B cell (primary cell): ENCODE measurements at regions of chr17 and their contacts with region 1.

Region 1: DNA sequence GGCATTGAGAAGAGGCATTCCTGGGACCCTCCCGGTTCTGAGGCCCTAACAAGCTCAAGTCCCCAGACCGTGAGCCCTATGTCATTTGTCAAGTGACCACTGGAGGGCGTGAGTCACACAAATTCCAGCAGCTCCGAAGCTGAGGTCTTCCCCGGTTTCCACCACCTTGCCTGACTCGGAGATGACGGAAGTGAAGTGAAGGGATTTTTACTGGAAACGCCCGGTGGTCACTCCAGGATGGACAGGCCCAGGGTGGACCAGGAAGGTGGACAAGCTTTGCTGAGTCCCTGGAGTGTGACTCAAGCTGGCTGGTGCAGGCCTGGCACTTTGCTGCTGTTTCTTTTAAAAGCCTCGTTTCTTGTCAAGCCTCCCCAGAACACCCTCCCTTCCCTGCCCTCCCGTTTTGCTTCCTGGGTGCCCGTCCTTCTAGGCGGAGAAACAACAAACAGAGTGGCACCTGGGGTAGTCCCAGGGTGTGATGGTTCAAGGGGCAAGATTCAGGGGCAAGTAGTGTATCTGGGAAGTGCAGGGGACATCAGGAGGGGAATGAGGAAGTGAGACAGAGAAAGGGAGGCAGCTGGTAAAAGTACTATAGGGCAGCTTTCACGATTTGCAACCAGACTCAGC is 5.3 kb upstream of the NOS2 start:
- DNase-seq: peak; percentile 88
- ATAC-seq: peak; percentile 64
- H3K4me3 ChIP-seq: peak overlapping the region; percentile 33 to 60 (median 48)
- H3K4me3 Mint-ChIP-seq: peak overlapping the region; percentile 88
- H3K27ac ChIP-seq: peak overlapping the region; percentile 58 to 78
- H3K27ac Mint-ChIP-seq: peak overlapping the region; percentile 97
- H3K4me1 ChIP-seq: peaks cover 26 to 46% of the 10 kb centered on the region in 2 donors
- H3K4me1 Mint-ChIP-seq: peaks cover 38% of the 10 kb centered on the region
- H3K27me3 ChIP-seq: no peaks in the 10 kb centered on the region
- H3K27me3 Mint-ChIP-seq: peaks cover 2% of the 10 kb centered on the region
- CTCF ChIP-seq: peak; percentile 93

Region 2: GRCh38 chr17:27733773-27734172 is 71.9 kb before region 1 on chr17:
- CTCF ChIA-PET with region 1: no interaction called
- POLR2A ChIA-PET with region 1: no interaction called
- intact Hi-C with region 1: no loop called
- DNase-seq: no peak
- ATAC-seq: no peak
- H3K4me3 ChIP-seq: no peak overlapping the region
- H3K4me3 Mint-ChIP-seq: no peak overlapping the region
- H3K27ac ChIP-seq: no peak overlapping the region
- H3K27ac Mint-ChIP-seq: no peak overlapping the region
- H3K4me1 ChIP-seq: no peaks in the 10 kb centered on the region
- H3K4me1 Mint-ChIP-seq: no peaks in the 10 kb centered on the region
- H3K27me3 ChIP-seq: peaks cover 0 to 3% (median 2%) of the 10 kb centered on the region in 4 experiments
- H3K27me3 Mint-ChIP-seq: peaks cover 35% of the 10 kb centered on the region
- CTCF ChIP-seq: no peak

Region 3: DNA sequence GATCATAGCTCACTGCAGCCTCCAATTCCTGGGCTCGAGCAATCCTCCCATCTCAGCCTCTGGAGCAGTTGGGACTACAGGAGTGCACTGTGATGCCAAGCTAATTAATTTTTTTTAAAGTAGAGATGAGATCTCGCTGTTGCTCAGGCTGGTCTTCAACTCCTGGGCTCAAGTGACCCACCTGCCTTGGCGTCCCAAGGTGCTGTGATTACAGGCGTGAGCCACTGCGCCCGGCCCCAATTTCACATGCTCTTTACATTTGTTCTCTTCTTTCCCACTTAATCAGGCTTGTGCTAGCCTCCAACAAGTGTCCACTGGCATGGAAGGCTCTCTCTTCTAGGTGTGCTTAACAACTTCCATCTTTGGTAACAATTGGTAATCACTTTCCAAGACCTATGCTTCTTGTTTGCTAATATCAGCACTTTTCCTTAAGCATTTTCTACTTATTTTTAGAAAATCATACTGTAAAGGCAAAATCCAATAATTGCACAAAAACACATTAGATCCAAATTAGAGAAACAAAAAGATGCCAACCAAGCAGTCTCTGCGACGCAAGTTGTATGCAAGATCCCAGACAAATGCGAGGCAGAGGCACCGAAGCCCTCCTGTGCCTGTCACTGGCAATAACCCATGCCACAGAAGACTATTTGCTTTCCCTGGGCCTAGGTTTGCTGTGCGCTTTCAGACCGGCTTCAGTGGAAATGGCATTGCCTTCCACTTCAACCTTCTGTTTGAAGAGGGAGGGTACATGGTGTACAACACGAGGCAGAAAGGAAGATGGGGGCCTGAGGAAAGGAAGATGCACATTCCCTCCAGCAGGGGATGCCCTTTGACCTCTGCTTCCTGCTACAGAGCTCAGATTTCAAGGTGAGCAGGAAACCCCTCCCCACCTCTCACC is 57.9 kb before region 1 on chr17:
- CTCF ChIA-PET with region 1: no interaction called
- POLR2A ChIA-PET with region 1: no interaction called
- intact Hi-C with region 1: no loop called
- DNase-seq: no peak
- ATAC-seq: no peak
- H3K4me3 ChIP-seq: no peak overlapping the region
- H3K4me3 Mint-ChIP-seq: no peak overlapping the region
- H3K27ac ChIP-seq: no peak overlapping the region
- H3K27ac Mint-ChIP-seq: no peak overlapping the region
- H3K4me1 ChIP-seq: no peaks in the 10 kb centered on the region
- H3K4me1 Mint-ChIP-seq: peaks cover 2% of the 10 kb centered on the region
- H3K27me3 ChIP-seq: no peaks in the 10 kb centered on the region
- H3K27me3 Mint-ChIP-seq: no peaks in the 10 kb centered on the region
- CTCF ChIP-seq: no peak

Region 4: GRCh38 chr17:27873760-27874159 is 68.1 kb after region 1 on chr17:
- CTCF ChIA-PET with region 1: interaction called, 252 read pairs
- POLR2A ChIA-PET with region 1: no interaction called
- intact Hi-C with region 1: no loop called
- DNase-seq: no peak
- ATAC-seq: no peak
- H3K4me3 ChIP-seq: no peak overlapping the region
- H3K4me3 Mint-ChIP-seq: no peak overlapping the region
- H3K27ac ChIP-seq: no peak overlapping the region
- H3K27ac Mint-ChIP-seq: no peak overlapping the region
- H3K4me1 ChIP-seq: no peaks in the 10 kb centered on the region
- H3K4me1 Mint-ChIP-seq: no peaks in the 10 kb centered on the region
- H3K27me3 ChIP-seq: no peaks in the 10 kb centered on the region
- H3K27me3 Mint-ChIP-seq: no peaks in the 10 kb centered on the region
- CTCF ChIP-seq: no peak

Region 5: DNA sequence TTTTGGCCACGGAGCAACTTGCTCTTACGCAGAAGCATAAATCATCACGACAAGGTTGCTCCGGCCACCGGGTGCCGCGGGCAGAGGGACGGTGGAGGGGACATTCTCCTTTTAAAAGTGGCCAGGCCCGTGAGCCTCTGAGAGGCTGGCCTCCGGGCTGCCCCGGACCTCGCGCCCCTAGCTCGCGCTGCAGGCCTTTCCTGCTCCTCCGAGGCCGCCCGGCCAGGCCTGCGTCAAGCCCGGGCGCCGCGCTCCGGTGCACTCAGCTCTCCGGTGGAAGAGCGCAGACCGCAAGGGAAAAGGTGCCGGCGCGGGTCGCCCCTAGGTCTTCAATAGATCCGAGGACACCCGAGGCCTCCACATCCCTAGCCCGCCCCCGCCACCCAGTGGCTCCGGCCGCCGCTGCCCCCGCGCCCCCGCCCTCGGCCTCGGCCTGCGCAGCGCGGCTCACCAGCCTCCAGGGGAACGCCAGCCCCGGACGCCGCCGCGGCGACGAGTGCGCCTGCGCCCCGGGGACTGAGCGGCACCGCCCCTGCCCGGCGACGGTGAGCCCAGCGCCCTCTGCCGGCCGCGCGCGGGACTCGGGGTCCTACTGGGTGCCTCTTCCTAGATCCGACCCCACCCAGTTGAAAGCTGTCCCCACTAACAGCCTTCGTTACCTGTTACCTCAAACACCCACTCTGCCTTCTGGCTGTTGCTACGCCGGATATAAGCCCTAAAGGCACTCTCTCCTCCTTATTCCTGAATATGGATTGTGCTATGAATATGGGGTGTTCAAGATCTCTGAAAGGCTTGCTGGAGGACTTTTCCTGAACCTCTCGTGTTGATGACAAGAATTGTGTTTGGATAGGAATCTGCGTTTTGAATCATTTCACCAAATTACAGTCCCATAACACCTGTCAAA is 87.5 kb after region 1 on chr17 and contains the start of gene LYRM9:
- CTCF ChIA-PET with region 1: interaction called, 108 read pairs
- POLR2A ChIA-PET with region 1: interaction called, 9 read pairs
- intact Hi-C with region 1: loop called (anchors 1 kb)
- DNase-seq: peak; percentile 93
- ATAC-seq: peak; percentile 98
- H3K4me3 ChIP-seq: peak within 1 kb of the TSS; percentile 58 to 82 (median 71)
- H3K4me3 Mint-ChIP-seq: peak within 1 kb of the TSS; percentile 80
- H3K27ac ChIP-seq: peak within 1 kb of the TSS; percentile 12 to 57
- H3K27ac Mint-ChIP-seq: peak within 1 kb of the TSS; percentile 77
- H3K4me1 ChIP-seq: peaks cover 16 to 23% of the 10 kb centered on the region in 2 donors
- H3K4me1 Mint-ChIP-seq: peaks cover 23% of the 10 kb centered on the region
- H3K27me3 ChIP-seq: no peaks in the 10 kb centered on the region
- H3K27me3 Mint-ChIP-seq: peaks cover 4% of the 10 kb centered on the region
- CTCF ChIP-seq: peak; percentile 91
- total RNA-seq, gene LYRM9: 12.1 and 14.0 TPM in 2 replicates

Region 6: GRCh38 chr17:28030386-28030785 is 224.8 kb after region 1 on chr17:
- CTCF ChIA-PET with region 1: no interaction called
- POLR2A ChIA-PET with region 1: no interaction called
- intact Hi-C with region 1: no loop called
- DNase-seq: no peak
- ATAC-seq: no peak
- H3K4me3 ChIP-seq: no peak overlapping the region
- H3K4me3 Mint-ChIP-seq: no peak overlapping the region
- H3K27ac ChIP-seq: no peak overlapping the region
- H3K27ac Mint-ChIP-seq: no peak overlapping the region
- H3K4me1 ChIP-seq: no peaks in the 10 kb centered on the region
- H3K4me1 Mint-ChIP-seq: no peaks in the 10 kb centered on the region
- H3K27me3 ChIP-seq: peaks cover 0 to 2% (median 0%) of the 10 kb centered on the region in 4 experiments
- H3K27me3 Mint-ChIP-seq: no peaks in the 10 kb centered on the region
- CTCF ChIP-seq: no peak

Region 7: DNA sequence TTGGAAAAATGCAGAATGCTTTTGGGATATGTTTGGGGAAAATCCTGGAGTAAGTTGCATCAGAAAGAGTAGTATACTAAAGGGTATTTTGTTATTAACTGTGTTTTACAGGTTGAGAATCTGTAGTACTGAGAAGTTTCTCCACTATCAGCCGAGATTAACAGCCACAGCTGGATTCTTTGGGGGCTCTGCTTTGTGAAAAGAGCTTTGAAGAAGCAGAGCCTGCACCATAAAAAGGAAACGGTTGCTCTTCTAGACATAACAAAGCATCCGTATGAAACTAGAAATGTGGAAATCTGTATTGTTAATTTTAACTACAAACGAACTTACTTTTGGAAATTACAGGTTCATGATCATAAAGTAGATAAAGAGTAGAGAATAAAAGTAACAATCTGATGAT is 242.2 kb after region 1 on chr17:
- CTCF ChIA-PET with region 1: no interaction called
- POLR2A ChIA-PET with region 1: no interaction called
- intact Hi-C with region 1: no loop called
- DNase-seq: no peak
- ATAC-seq: no peak
- H3K4me3 ChIP-seq: no peak overlapping the region
- H3K4me3 Mint-ChIP-seq: no peak overlapping the region
- H3K27ac ChIP-seq: no peak overlapping the region
- H3K27ac Mint-ChIP-seq: no peak overlapping the region
- H3K4me1 ChIP-seq: peaks cover 27 to 46% of the 10 kb centered on the region in 2 donors
- H3K4me1 Mint-ChIP-seq: peaks cover 71% of the 10 kb centered on the region
- H3K27me3 ChIP-seq: no peaks in the 10 kb centered on the region
- H3K27me3 Mint-ChIP-seq: no peaks in the 10 kb centered on the region
- CTCF ChIP-seq: no peak

Region 8: DNA sequence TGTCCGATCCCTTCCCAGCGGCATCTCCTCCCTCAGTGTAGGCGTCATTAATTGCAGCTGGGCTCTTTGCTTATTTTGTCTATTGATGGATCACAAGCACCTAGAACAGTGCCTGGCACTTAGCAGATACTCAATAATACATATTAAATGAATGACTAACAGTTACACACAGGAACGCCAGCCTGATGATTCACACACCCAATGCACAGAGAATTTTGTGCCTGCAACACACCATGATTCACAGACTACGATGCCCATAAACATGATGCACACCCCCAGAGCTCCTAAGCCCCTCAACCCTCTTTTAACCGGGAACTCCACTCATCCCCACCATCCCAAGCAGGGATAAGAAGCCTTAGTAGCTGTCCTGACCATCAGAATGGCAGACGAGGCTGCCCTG is 446.8 kb after region 1 on chr17:
- CTCF ChIA-PET with region 1: interaction called, 63 read pairs
- POLR2A ChIA-PET with region 1: no interaction called
- intact Hi-C with region 1: no loop called
- DNase-seq: no peak
- ATAC-seq: no peak
- H3K4me3 ChIP-seq: no peak overlapping the region
- H3K4me3 Mint-ChIP-seq: no peak overlapping the region
- H3K27ac ChIP-seq: no peak overlapping the region
- H3K27ac Mint-ChIP-seq: no peak overlapping the region
- H3K4me1 ChIP-seq: peaks cover 10 to 12% of the 10 kb centered on the region in 2 donors
- H3K4me1 Mint-ChIP-seq: peaks cover 7% of the 10 kb centered on the region
- H3K27me3 ChIP-seq: peaks cover 0 to 48% (median 16%) of the 10 kb centered on the region in 4 experiments
- H3K27me3 Mint-ChIP-seq: peaks cover 33% of the 10 kb centered on the region
- CTCF ChIP-seq: no peak